H1 (cell line): ENCODE measurements at regions of chr2 and their contacts with region 1.

Region 1: DNA sequence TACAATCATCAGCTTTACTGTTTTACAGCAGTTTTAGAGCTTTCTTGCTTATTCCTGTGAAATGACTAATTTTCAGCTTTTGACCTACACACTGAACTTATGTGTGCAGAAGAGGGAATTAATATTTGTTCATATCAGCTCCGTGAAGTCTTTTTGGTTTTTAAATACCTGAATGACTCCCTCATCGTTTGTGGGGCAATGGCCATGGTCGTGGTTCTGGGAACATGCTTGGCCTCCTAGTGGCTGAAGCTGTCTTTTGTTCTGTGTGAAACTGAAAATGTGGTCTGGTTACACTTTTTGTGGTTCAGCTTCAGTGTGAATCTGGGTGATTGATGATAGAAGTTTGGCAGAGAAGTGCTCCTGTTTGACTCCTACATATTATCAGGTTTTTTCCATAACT is 408.1 kb downstream of the THSD7B start:
- DNase-seq: no peak
- H3K4me3 ChIP-seq: no peak overlapping the region
- H3K27ac ChIP-seq: no peak overlapping the region
- H3K4me1 ChIP-seq: no peaks in the 10 kb centered on the region
- H3K27me3 ChIP-seq: peaks cover 0 to 1% (median 0%) of the 10 kb centered on the region in 4 experiments; a peak in 1 of 7 replicates
- CTCF ChIP-seq: peak; percentile 19 to 57 (median 50)
- EP300 ChIP-seq: no peak
- POLR2A ChIP-seq: no peak
- RAD21 ChIP-seq: peak; percentile 23 to 44; a peak in 3 of 4 replicates

Region 2: GRCh38 chr2:137157851-137158250 is 15.6 kb before region 1 on chr2:
- CTCF ChIA-PET with region 1: interaction called, 12 read pairs
- POLR2A ChIA-PET with region 1: no interaction called
- DNase-seq: no peak
- H3K4me3 ChIP-seq: no peak overlapping the region
- H3K27ac ChIP-seq: no peak overlapping the region
- H3K4me1 ChIP-seq: 0 out of 7 replicates have a peak, but pooled peaks cover 0 to 3% (median 0%) of the 10 kb centered on the region in 4 experiments
- H3K27me3 ChIP-seq: no peaks in the 10 kb centered on the region
- CTCF ChIP-seq: no peak
- EP300 ChIP-seq: no peak
- POLR2A ChIP-seq: no peak
- RAD21 ChIP-seq: no peak

Region 3: DNA sequence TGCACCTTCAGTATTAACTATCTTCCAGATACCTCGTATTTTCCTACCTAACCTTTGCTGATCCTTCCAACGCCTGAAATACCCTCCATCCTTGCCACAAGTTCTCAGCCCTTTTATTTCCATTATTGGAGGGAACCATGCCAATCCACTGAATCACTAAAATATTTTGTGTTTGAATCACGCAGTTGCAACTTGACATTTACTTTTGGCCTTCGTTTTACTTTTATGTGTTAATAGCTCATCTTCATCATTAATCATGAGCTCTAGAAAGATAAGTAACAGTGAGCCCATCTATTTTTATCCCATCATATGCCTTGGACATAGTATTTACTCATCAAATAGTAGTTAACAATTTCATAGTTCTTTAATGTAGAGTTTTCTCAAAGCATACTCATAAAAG is 55.1 kb after region 1 on chr2:
- CTCF ChIA-PET with region 1: no interaction called
- POLR2A ChIA-PET with region 1: no interaction called
- DNase-seq: no peak
- H3K4me3 ChIP-seq: no peak overlapping the region
- H3K27ac ChIP-seq: no peak overlapping the region
- H3K4me1 ChIP-seq: peaks cover 0 to 3% (median 0%) of the 10 kb centered on the region in 4 experiments; a peak in 2 of 7 replicates
- H3K27me3 ChIP-seq: no peaks in the 10 kb centered on the region
- CTCF ChIP-seq: no peak
- EP300 ChIP-seq: no peak
- POLR2A ChIP-seq: no peak
- RAD21 ChIP-seq: no peak